Left cardiac atrium (tissue), 4 donors: ENCODE measurements at regions of chr14 and their contacts with region 1.

Region 1: GRCh38 chr14:24734878-24735500 is 101.0 kb upstream of the GZMB start:
- DNase-seq: peak; percentile 25
- ATAC-seq: peak; percentile 68 to 76

Region 2: GRCh38 chr14:25042362-25043299 is 307.6 kb after region 1 on chr14:
- intact Hi-C with region 1: loop called in 1 of 2 experiments (anchors 2 kb)
- DNase-seq: peak; percentile 31
- ATAC-seq: peak; percentile 56 to 80

Region 3: GRCh38 chr14:25132732-25133422 is 397.9 kb after region 1 on chr14:
- intact Hi-C with region 1: loop called in 1 of 2 experiments (anchors 5 kb)
- DNase-seq: peak; percentile 72
- ATAC-seq: peak; percentile 98

Region 4: GRCh38 chr14:25150934-25151790 is 416.2 kb after region 1 on chr14:
- intact Hi-C with region 1: loop called (anchors 2 to 5 kb)
- DNase-seq: no peak
- ATAC-seq: peak in 1 of 2 donors; percentile 57